H1 (cell line): ENCODE measurements at regions of chr1 and their contacts with region 1.

Region 1: GRCh38 chr1:226702957-226703831 is 35.9 kb downstream of the ITPKB start:
- DNase-seq: peak in 1 of 2 experiments; percentile 82
- H3K4me3 ChIP-seq: peak overlapping the region; percentile 33 to 64 (median 42); a peak in 7 of 8 replicates
- H3K27ac ChIP-seq: peak overlapping the region; percentile 61; the same call in 1 of the 2 replicates
- H3K4me1 ChIP-seq: peaks cover 4 to 11% (median 7%) of the 10 kb centered on the region in 4 experiments; a peak in 4 of 7 replicates
- H3K27me3 ChIP-seq: no peaks in the 10 kb centered on the region
- CTCF ChIP-seq: no peak
- EP300 ChIP-seq: no peak
- POLR2A ChIP-seq: peak in 1 of 2 experiments; percentile 75; a peak in 1 of 3 replicates
- RAD21 ChIP-seq: no peak

Region 2: GRCh38 chr1:226692823-226693222 is 10.4 kb before region 1 on chr1:
- CTCF ChIA-PET with region 1: interaction called, 14 read pairs
- POLR2A ChIA-PET with region 1: interaction called, 5 read pairs
- DNase-seq: no peak
- H3K4me3 ChIP-seq: no peak overlapping the region
- H3K27ac ChIP-seq: no peak overlapping the region
- H3K4me1 ChIP-seq: peaks cover 2 to 9% (median 5%) of the 10 kb centered on the region in 4 experiments
- H3K27me3 ChIP-seq: no peaks in the 10 kb centered on the region
- CTCF ChIP-seq: no peak
- EP300 ChIP-seq: no peak
- POLR2A ChIP-seq: no peak
- RAD21 ChIP-seq: no peak

Region 3: DNA sequence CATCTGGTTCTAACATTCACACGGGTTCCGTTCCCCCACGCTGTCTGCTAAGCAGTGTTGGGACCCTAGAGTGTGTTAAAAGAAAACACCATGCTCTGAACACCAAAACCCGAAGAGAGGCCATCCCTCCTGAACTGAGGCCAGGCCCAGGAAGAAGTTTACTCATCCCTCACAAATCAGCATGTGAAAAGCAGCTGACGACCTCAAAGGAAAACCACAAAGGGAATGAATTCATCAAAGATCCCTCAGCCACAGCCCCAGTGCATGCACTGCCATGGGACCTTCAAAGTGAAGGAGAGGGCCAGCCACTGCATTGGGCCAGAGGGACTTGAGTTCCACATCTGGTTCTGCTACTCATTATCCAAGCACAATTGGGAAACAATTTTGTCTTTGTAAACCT is 160.3 kb after region 1 on chr1:
- CTCF ChIA-PET with region 1: no interaction called
- POLR2A ChIA-PET with region 1: no interaction called
- DNase-seq: peak in 1 of 2 experiments; percentile 41
- H3K4me3 ChIP-seq: no peak overlapping the region
- H3K27ac ChIP-seq: no peak overlapping the region
- H3K4me1 ChIP-seq: peaks cover 0 to 8% (median 7%) of the 10 kb centered on the region in 4 experiments; a peak in 3 of 7 replicates
- H3K27me3 ChIP-seq: 0 out of 7 replicates have a peak, but pooled peaks cover 0 to 2% (median 0%) of the 10 kb centered on the region in 4 experiments
- CTCF ChIP-seq: no peak
- EP300 ChIP-seq: no peak
- POLR2A ChIP-seq: no peak
- RAD21 ChIP-seq: no peak